MCF 10A (cell line): ENCODE measurements at regions of chr15 and their contacts with region 1.

Region 1: GRCh38 chr15:92097474-92098178 is 244.1 kb downstream of the SLCO3A1 start:
- DNase-seq: peak; percentile 61
- H3K4me3 Mint-ChIP-seq: no peak overlapping the region
- H3K27ac Mint-ChIP-seq: no peak overlapping the region
- H3K4me1 Mint-ChIP-seq: no peaks in the 10 kb centered on the region
- H3K27me3 Mint-ChIP-seq: no peaks in the 10 kb centered on the region
- CTCF ChIP-seq: peak; percentile 80

Region 2: GRCh38 chr15:92043263-92043662 is 54.4 kb before region 1 on chr15:
- CTCF ChIA-PET with region 1: no interaction called
- POLR2A ChIA-PET with region 1: no interaction called
- intact Hi-C with region 1: no loop called
- DNase-seq: no peak
- H3K4me3 Mint-ChIP-seq: no peak overlapping the region
- H3K27ac Mint-ChIP-seq: no peak overlapping the region
- H3K4me1 Mint-ChIP-seq: no peaks in the 10 kb centered on the region
- H3K27me3 Mint-ChIP-seq: no peaks in the 10 kb centered on the region
- CTCF ChIP-seq: no peak

Region 3: DNA sequence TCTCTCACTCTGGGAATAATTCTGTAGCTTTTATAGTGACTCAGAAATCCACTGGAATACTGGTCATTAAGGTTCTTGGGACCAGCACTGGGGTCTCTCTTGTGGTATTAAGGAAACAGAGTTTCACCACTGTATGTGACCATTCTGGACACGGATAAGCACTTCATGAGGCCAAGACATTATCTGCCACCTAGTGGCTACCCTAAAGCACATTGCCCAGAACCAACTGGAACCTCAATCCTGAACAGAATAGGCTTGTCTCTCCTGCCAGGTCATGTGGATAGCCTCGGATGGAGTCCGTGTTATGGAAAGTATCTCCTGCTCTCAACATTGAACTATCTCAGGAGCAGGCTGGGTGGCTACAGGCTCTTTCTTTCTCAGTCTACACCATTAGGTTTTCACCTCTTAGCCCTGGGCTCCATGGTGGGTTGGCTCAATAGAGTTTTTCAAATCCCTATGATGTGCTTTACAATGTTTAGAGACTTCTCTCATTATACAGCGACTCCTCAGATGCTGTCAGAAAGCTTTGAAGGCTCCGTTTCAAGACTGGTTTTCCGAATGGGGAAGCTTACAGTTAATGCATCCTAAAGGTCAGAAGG is 128.5 kb after region 1 on chr15:
- CTCF ChIA-PET with region 1: interaction called, 28 read pairs
- POLR2A ChIA-PET with region 1: no interaction called
- intact Hi-C with region 1: loop called (anchors 1 kb)
- DNase-seq: peak; percentile 42
- H3K4me3 Mint-ChIP-seq: no peak overlapping the region
- H3K27ac Mint-ChIP-seq: no peak overlapping the region
- H3K4me1 Mint-ChIP-seq: no peaks in the 10 kb centered on the region
- H3K27me3 Mint-ChIP-seq: peaks cover 9% of the 10 kb centered on the region
- CTCF ChIP-seq: peak; percentile 30

Region 4: DNA sequence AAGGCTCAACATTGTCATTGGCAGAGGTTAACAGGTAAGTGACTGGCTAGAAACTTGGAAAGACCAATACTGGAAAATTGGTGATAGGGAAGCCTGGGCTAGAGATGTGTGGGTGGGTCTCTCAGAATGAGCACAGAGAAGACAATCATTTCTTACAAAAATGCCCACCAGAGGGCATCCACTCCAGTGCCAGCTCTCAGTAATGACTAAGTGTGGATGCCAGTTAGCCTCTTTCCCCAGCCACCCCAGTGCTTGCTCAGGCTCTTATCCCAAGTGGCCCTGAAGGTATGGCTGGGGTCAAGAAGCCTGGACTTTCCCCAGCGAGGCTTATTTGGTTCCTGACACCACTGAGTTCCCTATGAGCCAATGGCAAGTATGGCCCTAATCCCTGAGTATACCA is 180.2 kb after region 1 on chr15:
- CTCF ChIA-PET with region 1: interaction called, 4 read pairs
- POLR2A ChIA-PET with region 1: no interaction called
- intact Hi-C with region 1: loop called (anchors 1 kb)
- DNase-seq: peak; percentile 53
- H3K4me3 Mint-ChIP-seq: no peak overlapping the region
- H3K27ac Mint-ChIP-seq: no peak overlapping the region
- H3K4me1 Mint-ChIP-seq: no peaks in the 10 kb centered on the region
- H3K27me3 Mint-ChIP-seq: peaks cover 29% of the 10 kb centered on the region
- CTCF ChIP-seq: peak; percentile 32

Region 5: GRCh38 chr15:92339361-92339760 is 241.7 kb after region 1 on chr15:
- CTCF ChIA-PET with region 1: no interaction called
- POLR2A ChIA-PET with region 1: no interaction called
- intact Hi-C with region 1: no loop called
- DNase-seq: no peak
- H3K4me3 Mint-ChIP-seq: no peak overlapping the region
- H3K27ac Mint-ChIP-seq: no peak overlapping the region
- H3K4me1 Mint-ChIP-seq: no peaks in the 10 kb centered on the region
- H3K27me3 Mint-ChIP-seq: peaks cover 43% of the 10 kb centered on the region
- CTCF ChIP-seq: no peak

Region 6: GRCh38 chr15:92383519-92384326 is 286.1 kb after region 1 on chr15:
- CTCF ChIA-PET with region 1: interaction called, 3 read pairs
- POLR2A ChIA-PET with region 1: no interaction called
- intact Hi-C with region 1: loop called (anchors 10 kb)
- DNase-seq: peak; percentile 42
- H3K4me3 Mint-ChIP-seq: no peak overlapping the region
- H3K27ac Mint-ChIP-seq: no peak overlapping the region
- H3K4me1 Mint-ChIP-seq: peaks cover 19% of the 10 kb centered on the region
- H3K27me3 Mint-ChIP-seq: peaks cover 46% of the 10 kb centered on the region
- CTCF ChIP-seq: peak; percentile 55

Region 7: GRCh38 chr15:92429378-92430068 is 331.9 kb after region 1 on chr15:
- CTCF ChIA-PET with region 1: no interaction called
- POLR2A ChIA-PET with region 1: no interaction called
- intact Hi-C with region 1: loop called (anchors 10 kb)
- DNase-seq: peak; percentile 71
- H3K4me3 Mint-ChIP-seq: no peak overlapping the region
- H3K27ac Mint-ChIP-seq: no peak overlapping the region
- H3K4me1 Mint-ChIP-seq: peaks cover 6% of the 10 kb centered on the region
- H3K27me3 Mint-ChIP-seq: peaks cover 54% of the 10 kb centered on the region
- CTCF ChIP-seq: no peak

Region 8: DNA sequence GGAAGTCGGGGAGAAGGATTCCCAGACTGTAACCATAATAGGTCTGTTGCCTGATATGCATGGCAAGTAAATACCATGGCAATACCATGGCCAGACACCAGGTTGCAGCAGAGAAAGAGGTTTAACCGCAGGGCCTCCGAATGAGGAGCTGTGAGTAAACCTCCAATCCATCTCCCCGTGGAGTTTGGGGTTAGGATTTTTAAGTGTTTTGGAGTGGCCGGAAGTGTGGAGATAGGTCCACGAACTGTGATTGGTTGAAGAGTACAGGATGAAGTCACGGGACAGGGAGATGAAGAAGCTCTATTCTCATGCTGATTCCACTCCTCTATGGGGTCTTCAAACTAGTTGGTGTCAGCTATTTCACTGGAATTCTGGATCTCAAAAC is 424.0 kb after region 1 on chr15:
- CTCF ChIA-PET with region 1: interaction called, 5 read pairs
- POLR2A ChIA-PET with region 1: no interaction called
- intact Hi-C with region 1: loop called (anchors 1 kb)
- DNase-seq: peak; percentile 77
- H3K4me3 Mint-ChIP-seq: no peak overlapping the region
- H3K27ac Mint-ChIP-seq: no peak overlapping the region
- H3K4me1 Mint-ChIP-seq: peaks cover 6% of the 10 kb centered on the region
- H3K27me3 Mint-ChIP-seq: peaks cover 11% of the 10 kb centered on the region
- CTCF ChIP-seq: peak; percentile 59

Region 9: GRCh38 chr15:92714477-92715401 is 617.1 kb after region 1 on chr15:
- CTCF ChIA-PET with region 1: interaction called, 62 read pairs
- POLR2A ChIA-PET with region 1: no interaction called
- intact Hi-C with region 1: loop called (anchors 1 kb)
- DNase-seq: peak; percentile 67
- H3K4me3 Mint-ChIP-seq: peak overlapping the region; percentile 69
- H3K27ac Mint-ChIP-seq: no peak overlapping the region
- H3K4me1 Mint-ChIP-seq: no peaks in the 10 kb centered on the region
- H3K27me3 Mint-ChIP-seq: peaks cover 12% of the 10 kb centered on the region
- CTCF ChIP-seq: peak; percentile 89